ENCODE measurements at regions of chr19 and their contacts with region 1.

Region 1: GRCh38 chr19:12789904-12790619 is 1.2 kb upstream of the JUNB start:
- DNase-seq: peak; percentile 71 to 94
- ATAC-seq: peak; percentile 51 to 53
- H3K4me3 ChIP-seq: peak overlapping the region; percentile 92
- H3K27ac ChIP-seq: peak overlapping the region; percentile 96 to 99
- H3K4me1 ChIP-seq: peaks cover 59% of the 10 kb centered on the region
- CTCF ChIP-seq: no peak
- EP300 ChIP-seq: 0 out of 5 replicates have a peak, but pooled peaks of 1 of the 2 experiments have one; percentile 10
- POLR2A ChIP-seq: 0 out of 2 replicates have a peak, but pooled peaks have one; percentile 9
- RAD21 ChIP-seq: no peak

Region 2: DNA sequence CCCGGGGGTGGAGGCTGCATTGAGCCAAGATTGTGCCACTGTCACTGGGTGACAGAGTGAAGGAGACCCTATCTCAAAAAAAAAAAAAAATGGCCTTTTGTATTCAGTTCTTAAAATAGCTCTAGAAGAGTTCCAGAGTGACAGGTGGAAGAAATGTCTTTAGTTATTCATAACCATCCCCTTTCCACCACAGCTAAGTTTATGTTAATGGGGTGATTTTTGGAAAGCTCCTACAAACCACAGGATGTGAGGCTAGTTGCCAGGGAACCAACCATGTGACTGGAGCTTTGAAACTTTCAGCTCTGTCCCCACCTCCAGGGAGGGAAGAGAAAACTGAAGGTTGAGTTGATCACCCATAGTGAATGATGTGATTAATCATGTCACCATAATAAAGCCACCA is 186.3 kb before region 1 on chr19:
- CTCF ChIA-PET with region 1: no interaction called
- POLR2A ChIA-PET with region 1: no interaction called
- DNase-seq: no peak
- ATAC-seq: no peak
- H3K4me3 ChIP-seq: no peak overlapping the region
- H3K27ac ChIP-seq: no peak overlapping the region
- H3K4me1 ChIP-seq: no peaks in the 10 kb centered on the region
- CTCF ChIP-seq: no peak
- EP300 ChIP-seq: no peak
- POLR2A ChIP-seq: no peak
- RAD21 ChIP-seq: no peak

Region 3: DNA sequence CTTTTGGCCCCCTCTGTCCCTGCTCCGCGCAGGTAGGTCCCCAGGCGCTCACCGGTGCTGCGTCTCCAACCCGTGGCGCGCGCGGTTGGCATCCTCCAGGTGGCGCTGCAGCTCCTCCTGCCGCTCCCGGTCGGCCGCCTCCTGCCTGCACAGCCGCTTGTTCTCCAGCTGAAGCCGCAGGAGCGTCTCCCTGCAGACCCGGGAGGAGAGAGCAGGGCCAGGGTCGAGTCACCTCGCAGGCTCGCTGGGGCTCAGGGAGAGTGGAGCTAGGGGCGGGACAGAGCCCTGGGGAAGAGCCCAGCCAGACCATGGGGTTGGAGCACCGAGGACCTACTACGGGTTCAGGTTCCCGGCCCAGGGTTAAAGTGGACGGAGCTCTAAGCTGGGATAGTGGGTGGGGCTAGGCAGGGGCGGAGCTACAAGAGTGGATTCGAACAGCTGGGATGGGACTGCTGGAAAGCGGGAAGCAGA is 24.0 kb before region 1 on chr19:
- CTCF ChIA-PET with region 1: interaction called, 901 read pairs
- POLR2A ChIA-PET with region 1: interaction called, 32 read pairs
- DNase-seq: peak; percentile 82 to 84
- ATAC-seq: peak; percentile 97
- H3K4me3 ChIP-seq: peak overlapping the region; percentile 40
- H3K27ac ChIP-seq: peak overlapping the region; percentile 48 to 87; a peak in 5 of 6 replicates
- H3K4me1 ChIP-seq: no peaks in the 10 kb centered on the region
- CTCF ChIP-seq: peak; percentile 78
- EP300 ChIP-seq: no peak
- POLR2A ChIP-seq: peak; percentile 23; the same call in 1 of the 2 replicates
- RAD21 ChIP-seq: peak; percentile 69 to 80

Region 4: GRCh38 chr19:12777217-12778016 is 12.6 kb before region 1 on chr19:
- CTCF ChIA-PET with region 1: interaction called, 901 read pairs
- POLR2A ChIA-PET with region 1: interaction called, 122 read pairs
- DNase-seq: peak in 1 of 2 experiments; percentile 77
- ATAC-seq: peak; percentile 56 to 75
- H3K4me3 ChIP-seq: peak overlapping the region; percentile 55
- H3K27ac ChIP-seq: peak overlapping the region; percentile 91 to 99
- H3K4me1 ChIP-seq: peaks cover 40% of the 10 kb centered on the region
- CTCF ChIP-seq: peak; percentile 77
- EP300 ChIP-seq: no peak
- POLR2A ChIP-seq: no peak
- RAD21 ChIP-seq: peak; percentile 75 to 80

Region 5: GRCh38 chr19:12806239-12807081 is 16.4 kb after region 1 on chr19 and contains the start of gene RNASEH2A:
- CTCF ChIA-PET with region 1: interaction called, 25 read pairs
- POLR2A ChIA-PET with region 1: interaction called, 8 read pairs
- DNase-seq: peak; percentile 81 to 86
- ATAC-seq: peak; percentile 97 to 99
- H3K4me3 ChIP-seq: peak within 1 kb of the TSS; percentile 78
- H3K27ac ChIP-seq: peak within 1 kb of the TSS; percentile 84 to 86
- H3K4me1 ChIP-seq: no peaks in the 10 kb centered on the region
- CTCF ChIP-seq: no peak
- EP300 ChIP-seq: no peak
- POLR2A ChIP-seq: peak; percentile 42
- RAD21 ChIP-seq: no peak
- polyA plus RNA-seq, gene RNASEH2A: 27.2 and 37.2 TPM in 2 replicates

Region 6: DNA sequence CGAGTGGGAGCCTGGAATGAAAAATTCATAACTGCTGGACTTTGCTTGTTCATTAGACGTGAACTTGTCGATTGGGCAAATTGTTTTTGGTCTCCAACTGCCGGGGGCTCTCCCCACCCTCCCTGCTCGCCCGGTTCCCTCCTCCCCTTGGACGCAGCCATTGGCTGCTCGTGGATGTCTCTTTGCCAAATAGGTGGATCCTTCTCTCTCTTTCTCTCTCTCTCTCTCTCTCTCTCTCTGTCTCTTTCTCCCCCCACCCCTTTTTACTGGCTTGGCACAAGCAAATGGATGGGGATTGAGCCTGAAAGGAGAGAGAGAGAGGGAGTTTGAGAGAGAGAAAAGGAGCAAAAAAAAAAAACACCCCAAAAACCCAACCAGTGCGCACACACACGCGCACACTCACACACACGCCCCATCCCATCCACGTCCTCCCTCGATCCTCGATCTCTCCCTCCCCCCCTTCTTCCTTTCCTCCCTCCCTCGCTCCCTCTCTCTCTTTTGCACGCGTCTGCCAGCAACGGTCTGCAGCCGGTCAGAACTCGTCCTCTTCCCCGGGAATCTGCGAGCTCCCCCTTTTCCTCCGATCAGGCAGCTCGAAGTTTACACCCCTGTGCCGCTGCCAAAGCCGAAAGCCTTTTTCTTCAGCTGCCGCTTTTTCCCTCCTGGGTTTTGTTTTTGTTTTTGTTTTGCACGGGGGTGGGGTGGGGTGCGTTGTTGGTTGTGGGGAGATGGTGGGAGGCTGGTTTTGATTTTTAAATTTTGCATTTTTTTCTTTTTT is 233.0 kb after region 1 on chr19:
- CTCF ChIA-PET with region 1: no interaction called
- POLR2A ChIA-PET with region 1: no interaction called
- DNase-seq: peak in 1 of 2 experiments; percentile 25
- ATAC-seq: no peak
- H3K4me3 ChIP-seq: peak overlapping the region; percentile 36
- H3K27ac ChIP-seq: peak overlapping the region in 1 of 2 experiments; percentile 58; a peak in 3 of 6 replicates
- H3K4me1 ChIP-seq: peaks cover 19% of the 10 kb centered on the region
- CTCF ChIP-seq: no peak
- EP300 ChIP-seq: no peak
- POLR2A ChIP-seq: no peak
- RAD21 ChIP-seq: no peak

Measured in A549 (cell line).